ENCODE measurements at regions of chr2 and their contacts with region 1.

Region 1: GRCh38 chr2:197804049-197804757 is at the start of gene PLCL1:
- DNase-seq: peak; percentile 93 to 99 (median 97)

Region 2: DNA sequence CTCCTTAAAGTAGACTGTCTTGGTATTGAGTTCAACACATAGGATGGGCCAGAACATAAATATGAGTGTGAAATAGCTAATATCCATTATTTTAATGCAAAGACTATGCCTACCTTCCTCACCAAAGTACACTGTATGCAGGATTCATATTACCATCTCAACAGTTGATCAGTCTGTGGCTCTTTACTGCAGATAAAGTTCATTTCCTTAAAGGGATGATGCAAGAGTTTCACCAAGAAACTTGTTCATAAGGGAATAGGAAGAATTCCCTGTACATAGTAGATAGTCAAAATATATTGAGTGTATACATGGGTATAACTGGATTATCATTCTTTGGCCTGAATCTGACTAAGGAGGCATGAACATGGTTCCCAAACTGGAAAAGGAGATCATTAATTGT is 64.0 kb before region 1 on chr2:
- intact Hi-C with region 1: no loop called
- DNase-seq: no peak

Region 3: DNA sequence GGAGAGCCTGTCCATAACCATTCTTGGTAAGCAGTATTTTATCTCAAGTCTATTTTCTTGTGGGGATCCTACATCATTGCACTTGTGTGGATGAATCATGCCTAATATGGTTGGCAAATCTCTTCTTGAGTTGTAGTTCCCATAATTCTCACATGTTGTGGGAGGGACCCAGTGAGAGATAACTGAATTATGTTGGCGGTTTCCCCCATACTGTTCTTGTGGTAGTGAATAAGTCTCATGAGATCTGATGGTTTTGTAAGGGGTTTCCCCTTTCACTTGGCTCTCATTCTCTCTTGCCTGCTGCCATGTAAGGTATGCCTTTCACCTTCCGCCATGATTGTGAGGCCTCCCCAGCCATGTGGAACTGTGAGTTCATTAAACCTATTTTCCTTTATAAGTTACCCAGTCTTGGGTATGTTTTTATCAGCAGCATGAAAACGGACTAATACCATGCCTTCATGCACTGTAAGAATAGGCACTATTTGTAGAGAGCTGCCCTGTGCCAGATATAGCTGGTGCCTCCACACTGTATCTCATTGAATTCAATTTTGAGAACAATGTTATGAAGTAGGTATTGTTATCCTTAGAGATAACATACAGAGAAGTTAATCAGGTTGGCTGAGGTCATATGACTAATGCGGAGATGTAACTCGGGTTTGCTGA is 148.5 kb after region 1 on chr2:
- intact Hi-C with region 1: loop called (anchors 5 kb)
- DNase-seq: no peak

Region 4: GRCh38 chr2:198053776-198054698 is 249.8 kb after region 1 on chr2:
- intact Hi-C with region 1: loop called (anchors 10 kb)
- DNase-seq: peak in 27 of 42 donors; percentile 15 to 78 (median 41)

Region 5: DNA sequence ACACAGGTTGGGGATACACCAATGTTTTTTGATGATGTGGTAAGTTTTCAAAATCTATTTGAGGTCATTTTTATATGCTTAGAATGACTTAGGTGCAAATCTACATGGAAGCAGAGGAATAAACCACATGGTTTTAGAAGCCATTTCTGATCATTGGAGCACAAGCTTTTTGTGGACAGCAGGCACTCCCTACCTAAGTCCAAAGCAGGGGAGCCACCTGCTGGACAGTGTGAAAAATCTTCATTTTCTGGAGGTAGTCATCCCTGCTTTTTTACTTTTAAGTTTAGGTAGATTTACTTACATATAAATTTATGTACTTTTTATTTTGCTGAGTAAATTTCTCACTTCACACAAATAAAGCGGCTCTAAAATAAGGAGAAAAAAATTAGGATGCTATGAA is 323.4 kb after region 1 on chr2:
- intact Hi-C with region 1: loop called (anchors 10 kb)
- DNase-seq: peak in 28 of 42 donors; percentile 14 to 74 (median 46)

Region 6: DNA sequence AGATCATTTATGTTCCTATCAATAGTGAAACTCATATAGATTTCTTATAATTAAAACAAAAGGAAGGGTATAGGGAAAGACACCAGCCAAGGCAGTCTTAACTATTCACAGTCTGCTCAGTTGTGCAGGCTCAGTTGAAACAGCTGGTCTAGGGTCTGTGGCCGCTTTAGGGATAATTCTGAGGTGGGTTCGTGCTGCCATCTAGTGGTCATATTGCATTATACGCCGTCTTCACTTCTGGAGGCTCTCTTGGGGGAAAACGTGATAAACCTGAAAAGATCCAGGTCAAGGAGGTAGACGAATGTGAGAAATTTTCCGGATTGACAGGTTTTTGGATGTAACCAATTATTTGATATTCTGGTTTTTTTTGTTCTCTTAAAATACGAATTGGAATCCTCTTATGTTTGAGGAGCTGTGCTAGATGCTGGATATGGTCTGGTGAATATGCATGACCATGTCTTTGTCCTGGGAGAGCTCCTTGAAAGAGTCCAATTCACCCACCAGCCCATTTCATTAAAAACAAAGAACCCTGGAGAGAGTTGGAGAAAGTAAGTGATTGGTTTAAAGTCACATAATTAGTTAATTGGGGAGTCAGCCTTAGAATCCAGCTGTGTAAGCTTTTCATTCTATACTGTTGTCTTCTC is 492.6 kb after region 1 on chr2:
- intact Hi-C with region 1: loop called (anchors 5 kb)
- DNase-seq: peak; percentile 11 to 90 (median 72)

Region 7: DNA sequence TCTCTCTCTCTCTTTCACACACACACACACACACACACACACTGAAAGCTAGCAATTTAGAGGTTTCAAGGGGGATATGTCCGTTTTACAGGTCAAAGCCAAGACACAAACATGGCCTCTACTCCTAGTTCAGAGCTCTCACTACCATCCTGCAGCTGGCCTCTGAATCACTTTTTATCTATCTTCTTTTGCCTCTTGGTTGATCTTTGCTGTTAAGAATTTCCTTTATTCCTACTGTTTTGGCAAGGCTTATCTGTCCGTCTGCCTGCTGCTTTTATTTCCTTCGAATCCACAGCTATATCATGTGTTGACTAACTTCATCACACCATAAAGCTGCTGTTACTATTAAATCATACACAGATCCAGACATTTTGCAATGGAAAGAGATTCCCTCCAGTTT is 543.1 kb after region 1 on chr2:
- intact Hi-C with region 1: no loop called
- DNase-seq: no peak

Measured in head of caudate nucleus (tissue), 42 donors.